ENCODE measurements at regions of chr11 and their contacts with region 1.

Region 1: GRCh38 chr11:61581030-61581928 is at the start of gene SYT7:
- DNase-seq: peak; percentile 89 to 100
- H3K4me3 ChIP-seq: peak within 1 kb of the TSS; percentile 46 to 85 (median 64)
- H3K27ac ChIP-seq: no peak within 1 kb of the TSS
- H3K4me1 ChIP-seq: peaks cover 4 to 41% (median 31%) of the 10 kb centered on the region in 4 experiments
- H3K27me3 ChIP-seq: peaks cover 2 to 32% (median 26%) of the 10 kb centered on the region in 4 experiments
- CTCF ChIP-seq: peak in 1 of 3 experiments; percentile 9; a peak in 1 of 4 replicates
- EP300 ChIP-seq: peak in 1 of 2 experiments; percentile 67; a peak in 1 of 3 replicates
- POLR2A ChIP-seq: no peak
- RAD21 ChIP-seq: peak; percentile 1 to 9; a peak in 1 of 4 replicates
- total RNA-seq, gene SYT7: 10.5 and 10.6 TPM in 2 replicates

Region 2: GRCh38 chr11:61526956-61527731 is 54.1 kb before region 1 on chr11:
- CTCF ChIA-PET with region 1: interaction called, 36 read pairs
- POLR2A ChIA-PET with region 1: interaction called, 3 read pairs
- DNase-seq: no peak
- H3K4me3 ChIP-seq: no peak overlapping the region
- H3K27ac ChIP-seq: no peak overlapping the region
- H3K4me1 ChIP-seq: peaks cover 0 to 11% (median 4%) of the 10 kb centered on the region in 4 experiments; a peak in 5 of 7 replicates
- H3K27me3 ChIP-seq: no peaks in the 10 kb centered on the region; a peak in 1 of 7 replicates
- CTCF ChIP-seq: no peak
- EP300 ChIP-seq: no peak
- POLR2A ChIP-seq: no peak
- RAD21 ChIP-seq: no peak

Region 3: GRCh38 chr11:61532139-61533038 is 48.9 kb before region 1 on chr11:
- CTCF ChIA-PET with region 1: interaction called, 36 read pairs
- POLR2A ChIA-PET with region 1: no interaction called
- DNase-seq: peak in 1 of 2 experiments; percentile 90
- H3K4me3 ChIP-seq: no peak overlapping the region
- H3K27ac ChIP-seq: no peak overlapping the region
- H3K4me1 ChIP-seq: peaks cover 0 to 11% (median 4%) of the 10 kb centered on the region in 4 experiments; a peak in 5 of 7 replicates
- H3K27me3 ChIP-seq: no peaks in the 10 kb centered on the region
- CTCF ChIP-seq: peak in 2 of 3 experiments; percentile 89 to 94; a peak in 3 of 4 replicates
- EP300 ChIP-seq: no peak
- POLR2A ChIP-seq: no peak
- RAD21 ChIP-seq: peak; percentile 69 to 81

Region 4: DNA sequence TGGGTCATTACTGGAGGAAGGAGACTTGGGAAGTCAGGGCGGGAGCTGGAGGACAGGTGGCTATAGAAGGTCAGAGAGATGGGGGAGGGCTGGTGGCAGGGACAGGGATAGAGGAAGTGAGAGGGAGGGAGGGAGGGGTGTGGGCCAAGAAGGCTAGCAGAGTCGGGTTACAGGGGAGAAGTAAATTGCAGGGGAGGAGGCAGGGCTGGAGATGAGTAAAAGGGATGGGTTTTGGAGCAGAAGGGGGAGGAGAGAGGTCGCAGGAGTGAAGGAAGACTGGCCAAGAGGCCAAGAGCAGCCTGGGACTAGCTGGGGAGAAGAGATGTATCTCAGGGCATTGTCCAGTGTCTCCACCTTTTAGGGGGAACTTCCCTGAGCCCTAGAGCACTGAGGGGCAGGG is 39.7 kb before region 1 on chr11:
- CTCF ChIA-PET with region 1: interaction called, 73 read pairs
- POLR2A ChIA-PET with region 1: no interaction called
- DNase-seq: no peak
- H3K4me3 ChIP-seq: no peak overlapping the region
- H3K27ac ChIP-seq: no peak overlapping the region
- H3K4me1 ChIP-seq: peaks cover 5 to 35% (median 18%) of the 10 kb centered on the region in 4 experiments
- H3K27me3 ChIP-seq: no peaks in the 10 kb centered on the region; a peak in 1 of 7 replicates
- CTCF ChIP-seq: no peak
- EP300 ChIP-seq: no peak
- POLR2A ChIP-seq: no peak
- RAD21 ChIP-seq: no peak

Region 5: GRCh38 chr11:61602775-61603569 is 21.7 kb after region 1 on chr11:
- CTCF ChIA-PET with region 1: interaction called, 43 read pairs
- POLR2A ChIA-PET with region 1: interaction called, 5 read pairs
- DNase-seq: no peak
- H3K4me3 ChIP-seq: no peak overlapping the region
- H3K27ac ChIP-seq: no peak overlapping the region
- H3K4me1 ChIP-seq: peaks cover 5 to 22% (median 18%) of the 10 kb centered on the region in 4 experiments
- H3K27me3 ChIP-seq: no peaks in the 10 kb centered on the region; a peak in 1 of 7 replicates
- CTCF ChIP-seq: no peak
- EP300 ChIP-seq: no peak
- POLR2A ChIP-seq: no peak
- RAD21 ChIP-seq: no peak

Region 6: DNA sequence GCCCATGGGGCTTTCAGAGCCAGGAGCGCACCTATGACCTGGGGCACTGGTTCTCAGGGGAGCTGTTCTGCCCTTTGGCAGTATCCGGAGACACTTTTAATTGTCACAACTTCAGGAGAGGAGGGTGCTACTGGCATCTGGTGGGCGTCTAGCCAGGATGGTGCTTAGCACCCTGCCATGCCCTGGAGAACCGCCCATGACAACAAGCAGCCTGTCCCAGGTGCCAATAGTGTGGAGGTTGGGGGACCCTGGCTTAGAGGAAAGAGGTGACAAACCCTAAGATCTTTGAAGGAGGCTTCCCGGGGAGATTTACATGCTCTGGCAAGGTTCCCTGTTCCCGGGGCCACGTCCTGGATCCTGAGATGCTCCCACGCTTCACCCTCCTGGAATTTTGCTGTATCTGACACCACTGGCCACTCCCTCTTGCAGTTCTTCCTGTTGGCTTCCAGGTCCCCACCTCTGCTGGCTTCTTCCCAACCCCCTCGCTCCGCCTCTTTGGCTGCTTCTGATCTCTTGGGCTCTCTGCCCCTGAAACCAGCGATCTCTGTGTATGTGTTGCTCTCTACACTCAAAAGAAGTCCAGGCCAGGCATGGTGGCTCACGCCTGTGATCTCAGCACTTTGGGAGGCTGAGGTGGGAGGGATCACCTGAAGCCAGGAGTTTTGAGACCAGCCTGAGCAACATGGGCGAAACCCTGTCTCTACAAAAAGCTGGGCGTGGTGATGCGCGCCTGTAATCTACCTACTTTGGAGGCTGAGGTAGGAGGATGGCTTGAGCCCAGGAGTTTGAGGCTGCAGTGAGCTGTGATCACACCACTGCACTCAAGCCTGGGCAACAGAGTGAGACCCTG is 279.0 kb after region 1 on chr11:
- CTCF ChIA-PET with region 1: no interaction called
- POLR2A ChIA-PET with region 1: no interaction called
- DNase-seq: no peak
- H3K4me3 ChIP-seq: no peak overlapping the region
- H3K27ac ChIP-seq: no peak overlapping the region
- H3K4me1 ChIP-seq: no peaks in the 10 kb centered on the region
- H3K27me3 ChIP-seq: no peaks in the 10 kb centered on the region
- CTCF ChIP-seq: no peak
- EP300 ChIP-seq: no peak
- POLR2A ChIP-seq: no peak
- RAD21 ChIP-seq: no peak

Region 7: GRCh38 chr11:61899146-61899841 is 318.0 kb after region 1 on chr11:
- CTCF ChIA-PET with region 1: no interaction called
- POLR2A ChIA-PET with region 1: no interaction called
- DNase-seq: peak; percentile 78 to 100
- H3K4me3 ChIP-seq: no peak overlapping the region
- H3K27ac ChIP-seq: no peak overlapping the region
- H3K4me1 ChIP-seq: peaks cover 0 to 18% (median 4%) of the 10 kb centered on the region in 4 experiments; a peak in 6 of 7 replicates
- H3K27me3 ChIP-seq: no peaks in the 10 kb centered on the region
- CTCF ChIP-seq: peak in 2 of 3 experiments; percentile 99 to 100; a peak in 3 of 4 replicates
- EP300 ChIP-seq: no peak
- POLR2A ChIP-seq: no peak
- RAD21 ChIP-seq: peak; percentile 92 to 95